ENCODE measurements at regions of chr7 and their contacts with region 1.

Region 1: GRCh38 chr7:5494683-5495561 is 71.3 kb upstream of the TNRC18 start:
- DNase-seq: peak; percentile 83
- ATAC-seq: peak; percentile 79
- H3K4me3 ChIP-seq: peak overlapping the region; percentile 64
- H3K27ac ChIP-seq: peak overlapping the region; percentile 78
- H3K4me1 ChIP-seq: peaks cover 14% of the 10 kb centered on the region
- H3K27me3 ChIP-seq: no peaks in the 10 kb centered on the region
- CTCF ChIP-seq: peak; percentile 89

Region 2: DNA sequence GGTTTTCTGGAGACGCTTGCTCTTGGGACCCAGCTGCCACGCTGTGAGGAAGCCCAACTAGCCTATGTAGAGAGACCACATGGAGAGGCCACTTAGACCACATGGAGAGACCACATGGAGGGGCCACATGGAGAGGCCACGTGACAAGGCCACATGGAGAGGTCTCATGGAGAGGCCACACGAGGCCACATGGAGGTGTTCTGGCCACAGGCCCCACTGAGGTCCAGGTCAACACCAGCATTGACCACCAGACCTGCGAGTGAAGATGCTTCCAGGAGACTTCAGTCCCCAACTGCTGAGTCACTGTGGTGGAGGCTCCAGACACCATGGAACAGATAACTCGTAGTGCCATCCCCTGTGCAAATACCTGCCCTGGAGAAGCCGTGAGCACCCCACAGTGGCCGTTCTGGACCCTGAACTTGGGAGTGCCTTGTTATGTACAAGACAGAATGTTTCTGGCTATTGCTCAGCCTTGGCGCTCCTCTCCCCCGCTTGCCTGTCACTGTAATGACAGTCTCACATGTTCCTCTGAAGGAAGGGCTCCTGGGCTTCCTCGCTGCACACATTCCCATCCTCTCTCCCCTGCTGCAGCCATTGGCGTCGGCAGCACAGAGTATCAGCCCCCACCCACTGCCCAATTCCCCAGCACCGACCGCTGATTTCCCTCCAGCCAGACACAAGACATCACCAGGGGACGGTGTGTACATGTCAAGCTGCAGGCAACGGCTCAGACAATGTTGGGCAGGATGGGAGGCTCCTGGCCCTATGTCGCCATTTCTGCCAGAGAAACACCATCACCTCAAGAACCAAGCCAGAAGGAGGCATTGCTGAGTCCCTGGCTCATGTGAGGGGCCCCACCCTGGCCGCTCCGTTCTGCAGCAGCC is 22.2 kb before region 1 on chr7:
- CTCF ChIA-PET with region 1: no interaction called
- POLR2A ChIA-PET with region 1: no interaction called
- intact Hi-C with region 1: no loop called
- DNase-seq: no peak
- ATAC-seq: peak; percentile 18; the same call in 1 of the 2 replicates
- H3K4me3 ChIP-seq: no peak overlapping the region
- H3K27ac ChIP-seq: no peak overlapping the region
- H3K4me1 ChIP-seq: no peaks in the 10 kb centered on the region
- H3K27me3 ChIP-seq: no peaks in the 10 kb centered on the region
- CTCF ChIP-seq: no peak

Region 3: GRCh38 chr7:5532520-5533335 is 37.8 kb after region 1 on chr7:
- CTCF ChIA-PET with region 1: no interaction called
- POLR2A ChIA-PET with region 1: no interaction called
- intact Hi-C with region 1: no loop called
- DNase-seq: no peak
- ATAC-seq: peak; percentile 6; the same call in 1 of the 2 replicates
- H3K4me3 ChIP-seq: no peak overlapping the region
- H3K27ac ChIP-seq: no peak overlapping the region
- H3K4me1 ChIP-seq: peaks cover 22% of the 10 kb centered on the region
- H3K27me3 ChIP-seq: no peaks in the 10 kb centered on the region
- CTCF ChIP-seq: no peak

Region 4: DNA sequence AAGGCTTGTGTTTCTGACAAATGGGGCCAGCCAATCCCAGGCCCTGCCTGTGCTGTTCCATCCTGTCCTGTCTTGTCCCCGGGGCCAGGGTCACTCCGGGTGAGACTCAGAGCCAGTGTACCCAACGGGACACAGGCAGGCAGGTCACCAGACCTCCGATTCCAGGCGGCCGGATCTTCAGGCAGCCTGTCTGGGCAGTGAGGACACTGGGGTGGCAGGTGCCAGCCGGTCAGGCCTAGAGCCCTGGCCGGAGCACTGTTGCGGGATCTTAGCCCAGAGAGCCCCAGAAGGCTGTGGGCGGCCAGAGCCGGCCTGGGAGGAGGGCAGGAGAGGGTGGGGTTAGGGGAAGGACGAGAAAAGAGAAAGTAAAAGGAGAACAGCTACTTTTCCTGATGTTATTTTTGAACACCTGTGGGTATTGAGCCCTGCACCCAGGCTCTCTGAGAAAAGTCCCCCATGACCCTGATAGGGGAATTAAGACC is 63.0 kb after region 1 on chr7:
- CTCF ChIA-PET with region 1: interaction called, 13 read pairs
- POLR2A ChIA-PET with region 1: no interaction called
- intact Hi-C with region 1: no loop called
- DNase-seq: no peak
- ATAC-seq: no peak
- H3K4me3 ChIP-seq: no peak overlapping the region
- H3K27ac ChIP-seq: no peak overlapping the region
- H3K4me1 ChIP-seq: peaks cover 16% of the 10 kb centered on the region; the same call in 1 of the 2 replicates
- H3K27me3 ChIP-seq: no peaks in the 10 kb centered on the region
- CTCF ChIP-seq: no peak

Measured in PC-3 (cell line).